Upper lobe of right lung (tissue), 1 donor: ENCODE measurements at regions of chr14 and their contacts with region 1.

Region 1: DNA sequence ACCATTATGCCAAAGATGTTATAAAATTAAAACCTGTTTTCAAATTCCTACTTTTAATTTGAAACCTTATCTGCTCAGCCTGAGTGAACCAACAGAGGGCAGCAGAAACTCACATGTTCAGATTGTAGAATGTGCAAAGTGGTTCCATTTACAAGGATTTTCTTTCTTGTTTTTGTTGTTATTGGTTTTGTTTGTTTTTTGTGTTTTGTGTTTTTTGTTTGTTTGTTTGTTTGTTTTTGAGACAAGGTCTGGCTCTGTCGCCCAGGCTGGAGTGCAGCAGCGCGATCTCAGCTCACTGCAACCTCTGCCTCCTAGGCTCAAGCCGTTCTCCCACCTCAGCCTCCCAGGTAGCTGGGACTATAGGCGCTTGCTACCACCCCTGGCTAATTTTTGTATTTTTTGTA is 22.8 kb upstream of the GARIN2 start:
- DNase-seq: no peak
- ATAC-seq: peak; percentile 70
- H3K4me3 ChIP-seq: no peak overlapping the region
- H3K27ac ChIP-seq: no peak overlapping the region
- H3K4me1 ChIP-seq: no peaks in the 10 kb centered on the region
- H3K27me3 ChIP-seq: no peaks in the 10 kb centered on the region
- CTCF ChIP-seq: peak; percentile 76

Region 2: GRCh38 chr14:66284346-66284745 is 882.1 kb before region 1 on chr14:
- intact Hi-C with region 1: no loop called
- DNase-seq: no peak
- ATAC-seq: no peak
- H3K4me3 ChIP-seq: no peak overlapping the region
- H3K27ac ChIP-seq: no peak overlapping the region
- H3K4me1 ChIP-seq: no peaks in the 10 kb centered on the region
- H3K27me3 ChIP-seq: no peaks in the 10 kb centered on the region
- CTCF ChIP-seq: no peak

Region 3: DNA sequence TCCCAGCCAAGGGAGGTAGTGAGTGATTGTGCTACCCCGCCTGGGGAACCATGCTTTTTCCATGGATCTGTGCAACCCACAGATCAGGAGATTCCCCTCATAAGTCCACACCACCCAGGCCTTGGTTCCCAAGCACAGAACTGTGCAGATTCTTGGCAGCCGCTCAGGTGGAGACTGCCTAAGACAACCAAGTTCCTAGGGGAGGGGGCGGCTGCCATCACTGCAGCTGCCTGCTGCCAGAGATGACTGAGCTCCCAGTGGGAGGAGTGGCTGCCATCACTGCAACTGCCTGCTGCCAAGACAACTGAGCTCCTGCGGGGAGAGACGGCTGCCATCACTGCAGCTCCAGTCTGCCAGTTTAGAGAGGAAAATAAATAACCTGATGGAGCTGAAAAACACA is 115.6 kb before region 1 on chr14:
- intact Hi-C with region 1: no loop called
- DNase-seq: no peak
- ATAC-seq: no peak
- H3K4me3 ChIP-seq: no peak overlapping the region
- H3K27ac ChIP-seq: no peak overlapping the region
- H3K4me1 ChIP-seq: no peaks in the 10 kb centered on the region
- H3K27me3 ChIP-seq: no peaks in the 10 kb centered on the region
- CTCF ChIP-seq: no peak

Region 4: DNA sequence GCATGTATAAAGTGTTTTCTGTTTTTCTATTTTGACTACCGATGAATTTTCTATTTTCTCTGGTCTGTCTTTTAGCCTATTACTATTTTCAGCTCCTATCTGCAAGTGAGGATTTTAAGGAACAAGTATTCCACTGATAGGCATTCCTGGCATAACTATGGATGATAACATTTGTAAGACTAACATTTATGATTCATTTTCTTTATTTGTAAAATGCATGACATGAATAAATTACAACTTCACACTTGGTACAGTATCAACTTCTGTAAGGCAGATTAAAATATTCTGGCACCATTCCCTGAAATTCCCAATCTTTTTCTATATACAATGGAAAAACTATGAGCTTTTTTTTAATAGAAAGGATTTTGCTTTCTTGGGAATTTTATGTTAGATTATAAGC is 98.2 kb before region 1 on chr14:
- intact Hi-C with region 1: no loop called
- DNase-seq: no peak
- ATAC-seq: no peak
- H3K4me3 ChIP-seq: no peak overlapping the region
- H3K27ac ChIP-seq: no peak overlapping the region
- H3K4me1 ChIP-seq: no peaks in the 10 kb centered on the region
- H3K27me3 ChIP-seq: no peaks in the 10 kb centered on the region
- CTCF ChIP-seq: no peak

Region 5: GRCh38 chr14:67285876-67286452 is 119.5 kb after region 1 on chr14:
- intact Hi-C with region 1: loop called (anchors 10 kb)
- DNase-seq: no peak
- ATAC-seq: no peak
- H3K4me3 ChIP-seq: no peak overlapping the region
- H3K27ac ChIP-seq: no peak overlapping the region
- H3K4me1 ChIP-seq: no peaks in the 10 kb centered on the region
- H3K27me3 ChIP-seq: no peaks in the 10 kb centered on the region
- CTCF ChIP-seq: peak; percentile 66